ENCODE measurements at regions of chr19 and their contacts with region 1.

Region 1: GRCh38 chr19:45038931-45039893 is at the start of gene CLASRP:
- DNase-seq: peak; percentile 71
- H3K4me3 ChIP-seq: peak within 1 kb of the TSS; percentile 95
- H3K27ac ChIP-seq: peak within 1 kb of the TSS; percentile 96
- H3K27me3 ChIP-seq: no peaks in the 10 kb centered on the region
- CTCF ChIP-seq: no peak
- polyA plus RNA-seq, gene CLASRP: 12.4 and 13.9 TPM in 2 replicates

Region 2: GRCh38 chr19:45001087-45001739 is 38.0 kb before region 1 on chr19 and contains the start of gene RELB:
- CTCF ChIA-PET with region 1: no interaction called
- POLR2A ChIA-PET with region 1: interaction called, 12 read pairs
- DNase-seq: peak; percentile 72
- H3K4me3 ChIP-seq: peak within 1 kb of the TSS; percentile 84
- H3K27ac ChIP-seq: peak within 1 kb of the TSS; percentile 97
- H3K27me3 ChIP-seq: no peaks in the 10 kb centered on the region
- CTCF ChIP-seq: no peak
- polyA plus RNA-seq, gene RELB: 9.9 and 13.9 TPM in 2 replicates

Region 3: GRCh38 chr19:45059278-45059965 is 20.2 kb after region 1 on chr19:
- CTCF ChIA-PET with region 1: interaction called, 14 read pairs
- POLR2A ChIA-PET with region 1: interaction called, 3 read pairs
- DNase-seq: peak; percentile 15
- H3K4me3 ChIP-seq: no peak overlapping the region
- H3K27ac ChIP-seq: peak overlapping the region; percentile 11
- H3K27me3 ChIP-seq: no peaks in the 10 kb centered on the region
- CTCF ChIP-seq: peak; percentile 86

Region 4: GRCh38 chr19:45137179-45137761 is 98.1 kb after region 1 on chr19:
- CTCF ChIA-PET with region 1: no interaction called
- POLR2A ChIA-PET with region 1: no interaction called
- DNase-seq: no peak
- H3K4me3 ChIP-seq: no peak overlapping the region
- H3K27ac ChIP-seq: no peak overlapping the region
- H3K27me3 ChIP-seq: no peaks in the 10 kb centered on the region
- CTCF ChIP-seq: no peak

Measured in AG04450 (cell line).